Motor neuron (in vitro differentiated cells): ENCODE measurements at regions of chr7 and their contacts with region 1.

Region 1: DNA sequence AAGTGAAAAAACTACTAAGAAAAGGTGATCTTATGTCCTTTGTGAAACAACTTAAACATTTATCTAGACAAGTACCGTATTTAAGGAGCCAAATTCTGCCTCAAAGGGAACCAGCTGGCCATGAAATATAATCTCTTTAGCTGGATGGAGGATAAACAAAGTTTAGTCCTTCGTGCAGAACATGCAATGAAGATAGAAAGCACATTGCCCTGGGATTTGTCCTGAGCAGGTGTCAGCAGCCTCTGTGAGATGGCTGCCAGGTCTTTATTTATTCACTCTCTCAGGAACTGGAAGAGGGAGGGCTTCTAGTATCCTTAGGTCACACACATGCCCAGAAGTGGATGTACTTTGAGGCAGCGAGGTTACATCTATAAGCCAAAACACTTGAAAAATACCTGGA is 57.4 kb upstream of the CASD1 start:
- ATAC-seq: no peak
- H3K4me3 ChIP-seq: no peak overlapping the region
- H3K27ac ChIP-seq: no peak overlapping the region
- H3K4me1 ChIP-seq: no peaks in the 10 kb centered on the region

Region 2: GRCh38 chr7:94657771-94658693 is 205.8 kb after region 1 on chr7:
- in situ Hi-C with region 1: loop called in 1 of 9 experiments (anchors 25 kb)
- ATAC-seq: peak; percentile 81 to 86 (median 84)
- H3K4me3 ChIP-seq: peak overlapping the region; percentile 45 to 62 (median 57)
- H3K27ac ChIP-seq: peak overlapping the region; percentile 52 to 55
- H3K4me1 ChIP-seq: peaks cover 0 to 3% of the 10 kb centered on the region in 2 donors

Region 3: DNA sequence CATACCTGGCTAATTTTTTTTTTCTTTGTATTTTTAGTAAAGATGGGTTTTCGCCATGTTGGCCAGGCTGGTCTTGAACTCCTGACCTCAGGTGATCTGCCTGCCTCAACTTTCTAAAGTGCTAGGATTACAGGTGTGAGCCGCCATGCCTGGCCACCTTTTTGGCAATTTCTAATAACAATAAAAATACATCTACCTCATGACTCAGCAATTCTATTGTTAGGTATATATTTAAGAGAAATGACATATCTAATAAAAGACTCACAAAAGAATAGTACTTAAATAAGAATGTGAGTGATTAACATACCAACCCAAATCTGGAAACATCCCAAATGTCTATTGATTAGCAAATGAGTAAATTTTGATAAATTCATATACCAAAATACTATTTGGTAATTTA is 351.6 kb after region 1 on chr7:
- in situ Hi-C with region 1: no loop called
- ATAC-seq: no peak
- H3K4me3 ChIP-seq: no peak overlapping the region
- H3K27ac ChIP-seq: no peak overlapping the region
- H3K4me1 ChIP-seq: no peaks in the 10 kb centered on the region

Region 4: DNA sequence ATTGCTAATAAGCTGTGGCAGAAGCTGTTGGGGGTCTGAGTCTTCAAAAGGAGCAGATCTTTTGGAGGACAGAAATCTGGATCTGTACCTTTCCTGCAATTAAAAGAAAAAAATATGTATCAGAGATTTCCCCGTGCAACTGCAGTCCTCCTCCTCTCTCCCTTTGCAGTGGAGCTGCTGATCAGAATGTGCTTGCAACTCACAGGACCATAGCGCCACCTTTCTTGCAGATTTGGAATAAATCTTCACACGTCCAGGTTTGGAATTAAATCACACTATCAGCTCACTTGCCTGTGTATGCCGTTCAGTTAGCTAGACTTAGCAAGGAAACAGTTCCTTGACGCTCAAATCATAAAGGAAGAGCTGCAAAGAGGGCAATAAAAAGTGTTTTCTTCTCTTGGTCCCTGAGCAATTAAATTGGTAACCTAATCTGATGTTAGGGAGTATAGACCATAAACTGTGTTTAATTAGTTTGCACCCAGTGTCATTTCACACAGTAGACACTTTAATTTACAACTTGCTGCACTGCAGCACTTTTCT is 794.7 kb after region 1 on chr7:
- in situ Hi-C with region 1: loop called in 1 of 9 experiments (anchors 25 kb)
- ATAC-seq: peak; percentile 80 to 97 (median 86)
- H3K4me3 ChIP-seq: no peak overlapping the region
- H3K27ac ChIP-seq: no peak overlapping the region
- H3K4me1 ChIP-seq: peaks cover 0 to 2% of the 10 kb centered on the region in 2 donors

Region 5: GRCh38 chr7:95476904-95477594 is 1024.8 kb after region 1 on chr7:
- in situ Hi-C with region 1: loop called in 2 of 9 experiments (anchors 25 kb)
- ATAC-seq: peak in 7 of 8 experiments; percentile 12 to 49 (median 36)
- H3K4me3 ChIP-seq: no peak overlapping the region
- H3K27ac ChIP-seq: no peak overlapping the region
- H3K4me1 ChIP-seq: peaks cover 35 to 49% of the 10 kb centered on the region in 2 donors